Ascending aorta (tissue), 2 donors: ENCODE measurements at regions of chr6 and their contacts with region 1.

Region 1: GRCh38 chr6:29887819-29888776 is 54.2 kb upstream of the HLA-A start:
- DNase-seq: peak in 1 of 2 donors; percentile 92
- H3K4me3 ChIP-seq: peak overlapping the region in 1 of 2 donors; percentile 82
- H3K27ac ChIP-seq: peak overlapping the region in 1 of 2 donors; percentile 97
- H3K4me1 ChIP-seq: peaks cover 0 to 5% of the 10 kb centered on the region in 2 donors
- H3K27me3 ChIP-seq: no peaks in the 10 kb centered on the region
- CTCF ChIP-seq: no peak

Region 2: DNA sequence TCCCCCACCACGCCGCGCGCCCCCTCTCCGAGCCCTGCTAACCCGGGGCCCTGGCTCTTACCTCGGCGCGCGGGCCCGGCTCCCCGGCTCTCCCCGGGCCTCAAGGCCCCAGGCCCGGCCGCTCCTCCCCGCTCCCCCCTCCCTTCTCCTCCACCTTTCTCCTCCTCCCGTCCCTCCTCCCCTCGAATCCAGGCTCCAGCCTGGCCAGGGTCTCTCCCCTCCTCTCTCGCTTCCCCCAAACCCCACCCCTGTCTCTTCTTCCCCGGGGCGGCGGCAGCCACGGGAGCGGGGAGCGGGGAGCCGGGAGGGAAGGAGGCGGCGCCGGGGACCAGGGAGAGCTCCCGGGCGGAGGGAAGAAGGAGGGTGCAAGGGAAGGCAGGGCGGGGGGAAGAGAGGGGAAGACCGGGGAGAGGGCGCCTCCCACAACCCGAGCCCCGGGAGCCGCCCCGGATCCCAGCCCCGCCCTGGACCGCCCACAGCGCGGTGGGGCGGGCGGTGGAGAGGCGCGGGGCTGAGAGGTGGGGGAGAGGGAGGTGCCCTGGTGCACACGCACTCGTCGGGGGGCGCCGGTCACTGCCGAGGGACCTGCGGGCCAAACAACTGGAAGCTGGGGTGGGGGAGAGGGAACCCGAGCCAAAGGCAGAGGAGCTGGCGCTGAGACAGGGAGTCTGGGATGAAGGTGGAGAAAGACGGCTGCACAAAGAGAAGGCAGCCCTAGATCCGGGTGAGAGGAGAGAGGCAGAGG is 255.1 kb before region 1 on chr6 and contains the start of gene GABBR1:
- intact Hi-C with region 1: loop called (anchors 2 kb)
- DNase-seq: peak; percentile 42 to 94
- H3K4me3 ChIP-seq: peak within 1 kb of the TSS; percentile 77 to 81
- H3K27ac ChIP-seq: peak within 1 kb of the TSS; percentile 79 to 81
- H3K4me1 ChIP-seq: peaks cover 8 to 17% of the 10 kb centered on the region in 2 donors
- H3K27me3 ChIP-seq: no peaks in the 10 kb centered on the region
- CTCF ChIP-seq: no peak
- total RNA-seq, gene GABBR1: 166 TPM

Region 3: DNA sequence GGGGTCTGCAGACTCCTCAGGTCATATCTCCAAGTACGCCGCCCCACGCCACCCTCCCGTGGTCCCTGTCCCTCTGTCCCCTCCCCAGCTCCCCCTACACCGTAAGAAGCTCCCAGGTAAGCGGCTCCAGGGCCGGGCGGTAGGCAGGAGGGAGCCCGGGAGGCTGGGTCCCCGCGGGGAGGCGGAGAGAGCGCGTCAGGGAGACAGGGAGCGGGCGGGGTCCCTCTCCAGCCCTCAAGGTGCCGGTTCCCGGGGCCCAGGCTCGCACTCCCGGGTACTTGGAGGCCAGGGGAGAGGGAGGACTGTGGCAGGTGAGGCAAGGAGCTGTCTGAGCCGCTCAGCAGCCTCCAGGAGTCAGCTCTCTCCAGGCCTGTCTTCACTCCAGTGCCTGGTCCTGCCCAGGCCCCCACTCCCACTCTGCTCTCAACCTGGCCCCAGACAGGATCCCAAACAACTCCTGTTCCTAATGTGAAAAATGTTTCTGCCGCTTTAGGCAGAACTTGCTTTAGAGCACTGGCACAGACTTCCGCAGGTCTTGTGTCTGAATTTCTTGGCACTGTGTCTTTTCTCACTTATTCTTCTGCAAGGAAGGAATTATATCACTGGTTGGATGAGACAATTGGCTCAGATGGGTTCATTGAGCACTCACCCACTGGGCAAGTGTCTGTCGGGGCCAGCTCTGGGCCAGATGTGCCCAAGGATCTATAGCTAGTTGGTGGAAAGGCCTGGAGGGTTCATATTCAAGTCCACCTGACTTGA is 23.9 kb before region 1 on chr6:
- intact Hi-C with region 1: no loop called
- DNase-seq: no peak
- H3K4me3 ChIP-seq: no peak overlapping the region
- H3K27ac ChIP-seq: no peak overlapping the region
- H3K4me1 ChIP-seq: no peaks in the 10 kb centered on the region
- H3K27me3 ChIP-seq: no peaks in the 10 kb centered on the region
- CTCF ChIP-seq: no peak

Region 4: DNA sequence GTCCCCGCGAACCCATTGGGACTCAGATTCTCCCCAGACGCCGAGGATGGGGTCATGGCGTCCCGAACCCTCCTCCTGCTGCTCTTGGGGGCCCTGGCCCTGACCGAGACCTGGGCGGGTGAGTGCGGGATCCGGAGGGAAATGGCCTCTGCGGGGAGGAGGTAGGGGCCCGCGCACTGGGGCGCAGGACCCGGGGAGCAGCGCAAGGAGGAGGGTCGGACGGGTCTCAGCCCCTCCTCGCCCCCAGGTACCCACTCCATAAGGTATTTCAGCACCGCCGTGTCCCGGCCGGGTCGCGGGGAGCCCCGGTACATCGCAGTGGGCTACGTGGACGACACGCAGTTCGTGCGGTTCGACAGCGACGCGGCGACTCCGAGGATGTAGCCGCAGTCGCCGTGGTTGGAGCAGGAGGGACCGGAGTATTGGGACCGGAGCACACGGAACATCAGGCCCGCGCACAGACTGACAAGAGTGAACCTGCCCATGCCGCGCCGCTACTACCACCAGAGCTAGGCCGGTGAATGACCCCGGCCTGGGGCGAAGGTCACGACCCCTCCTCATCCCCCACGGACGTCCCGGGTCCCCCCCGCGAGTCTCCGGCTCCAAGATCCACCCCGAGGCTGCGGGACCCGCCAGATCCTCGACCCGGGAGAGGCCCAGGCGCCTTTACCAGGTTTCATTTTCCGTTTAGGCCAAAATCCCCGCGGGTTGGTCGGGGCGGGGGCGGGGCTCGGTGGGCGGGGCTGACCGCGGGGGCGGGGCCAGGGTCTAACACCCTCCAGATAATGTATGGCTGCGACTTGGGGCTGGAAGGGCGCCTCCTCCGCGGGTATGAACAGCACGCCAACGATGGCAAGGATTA is 38.5 kb after region 1 on chr6:
- intact Hi-C with region 1: loop called (anchors 2 kb)
- DNase-seq: peak in 1 of 2 donors; percentile 82
- H3K4me3 ChIP-seq: peak overlapping the region in 1 of 2 donors; percentile 66
- H3K27ac ChIP-seq: peak overlapping the region in 1 of 2 donors; percentile 79
- H3K4me1 ChIP-seq: no peaks in the 10 kb centered on the region
- H3K27me3 ChIP-seq: no peaks in the 10 kb centered on the region
- CTCF ChIP-seq: no peak

Region 5: DNA sequence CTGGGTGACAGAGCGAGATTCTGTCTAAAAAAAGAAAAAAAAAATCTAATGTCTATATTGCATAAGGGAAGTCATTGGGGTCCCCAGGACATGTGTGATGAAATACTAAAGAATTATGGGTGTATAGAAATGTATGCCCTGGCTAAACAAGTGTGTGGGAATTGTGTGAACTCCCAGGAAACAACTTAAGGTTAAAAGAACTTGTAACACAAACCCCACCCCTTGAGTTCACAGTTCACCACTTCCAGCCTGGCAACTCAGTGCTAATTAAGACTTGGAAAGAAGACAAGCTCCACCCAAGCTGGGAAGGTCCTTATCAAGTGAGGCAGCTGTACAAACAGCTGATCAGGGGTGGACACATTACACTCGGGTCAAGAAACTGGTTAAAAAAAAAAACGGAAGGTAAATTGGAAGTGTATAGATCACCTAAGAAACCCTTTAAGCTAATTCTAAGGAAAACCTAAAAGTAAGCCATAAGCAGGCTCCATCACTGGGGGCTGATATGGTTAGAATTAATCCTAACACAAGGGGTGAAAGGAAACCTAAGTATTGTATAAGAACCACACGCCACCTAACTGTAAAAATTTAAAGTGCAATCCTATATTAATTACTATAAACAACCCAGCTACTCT is 79.4 kb after region 1 on chr6:
- intact Hi-C with region 1: no loop called
- DNase-seq: no peak
- H3K4me3 ChIP-seq: no peak overlapping the region
- H3K27ac ChIP-seq: peak overlapping the region in 1 of 2 donors; percentile 83
- H3K4me1 ChIP-seq: peaks cover 13 to 23% of the 10 kb centered on the region in 2 donors
- H3K27me3 ChIP-seq: no peaks in the 10 kb centered on the region
- CTCF ChIP-seq: no peak

Region 6: GRCh38 chr6:30304002-30304401 is 415.9 kb after region 1 on chr6:
- intact Hi-C with region 1: no loop called
- DNase-seq: no peak
- H3K4me3 ChIP-seq: no peak overlapping the region
- H3K27ac ChIP-seq: no peak overlapping the region
- H3K4me1 ChIP-seq: no peaks in the 10 kb centered on the region
- H3K27me3 ChIP-seq: no peaks in the 10 kb centered on the region
- CTCF ChIP-seq: no peak